ENCODE measurements at regions of chr9 and their contacts with region 1.

Region 1: GRCh38 chr9:27489087-27489876 is 34.8 kb upstream of the IFNK start:
- DNase-seq: no peak
- H3K4me3 ChIP-seq: peak overlapping the region in 2 of 4 experiments; percentile 2 to 28; a peak in 2 of 8 replicates
- H3K27ac ChIP-seq: peak overlapping the region; percentile 50; the same call in 1 of the 2 replicates
- H3K4me1 ChIP-seq: peaks cover 11 to 27% (median 18%) of the 10 kb centered on the region in 4 experiments; a peak in 6 of 7 replicates
- H3K27me3 ChIP-seq: no peaks in the 10 kb centered on the region
- CTCF ChIP-seq: peak in 1 of 3 experiments; percentile 3; a peak in 2 of 4 replicates
- EP300 ChIP-seq: no peak
- POLR2A ChIP-seq: no peak
- RAD21 ChIP-seq: peak; percentile 30 to 32; a peak in 2 of 4 replicates

Region 2: DNA sequence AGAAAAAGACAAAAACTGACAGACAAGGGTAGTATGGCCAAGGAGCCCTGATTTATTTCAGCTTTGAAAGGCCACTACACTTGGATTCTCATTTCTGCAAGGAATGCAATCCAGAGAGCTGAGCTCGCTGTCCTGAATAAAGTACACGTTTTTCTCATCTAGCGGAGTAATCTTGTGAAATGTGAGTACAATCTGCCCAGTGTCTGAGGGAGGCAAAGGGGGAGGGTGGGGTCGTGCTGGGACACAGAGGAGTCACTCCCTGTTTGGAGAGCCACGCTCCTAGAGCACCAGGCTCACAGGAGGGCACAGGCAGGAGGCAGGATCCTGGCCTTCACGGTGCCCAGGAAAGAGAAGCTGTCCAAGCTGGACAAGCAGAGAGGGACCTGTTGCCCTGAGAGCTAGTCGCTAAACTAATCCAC is 16.2 kb before region 1 on chr9:
- CTCF ChIA-PET with region 1: interaction called, 28 read pairs
- POLR2A ChIA-PET with region 1: interaction called, 5 read pairs
- DNase-seq: no peak
- H3K4me3 ChIP-seq: no peak overlapping the region
- H3K27ac ChIP-seq: no peak overlapping the region
- H3K4me1 ChIP-seq: peaks cover 0 to 13% (median 3%) of the 10 kb centered on the region in 4 experiments; a peak in 2 of 7 replicates
- H3K27me3 ChIP-seq: no peaks in the 10 kb centered on the region
- CTCF ChIP-seq: no peak
- EP300 ChIP-seq: no peak
- POLR2A ChIP-seq: no peak
- RAD21 ChIP-seq: no peak

Region 3: DNA sequence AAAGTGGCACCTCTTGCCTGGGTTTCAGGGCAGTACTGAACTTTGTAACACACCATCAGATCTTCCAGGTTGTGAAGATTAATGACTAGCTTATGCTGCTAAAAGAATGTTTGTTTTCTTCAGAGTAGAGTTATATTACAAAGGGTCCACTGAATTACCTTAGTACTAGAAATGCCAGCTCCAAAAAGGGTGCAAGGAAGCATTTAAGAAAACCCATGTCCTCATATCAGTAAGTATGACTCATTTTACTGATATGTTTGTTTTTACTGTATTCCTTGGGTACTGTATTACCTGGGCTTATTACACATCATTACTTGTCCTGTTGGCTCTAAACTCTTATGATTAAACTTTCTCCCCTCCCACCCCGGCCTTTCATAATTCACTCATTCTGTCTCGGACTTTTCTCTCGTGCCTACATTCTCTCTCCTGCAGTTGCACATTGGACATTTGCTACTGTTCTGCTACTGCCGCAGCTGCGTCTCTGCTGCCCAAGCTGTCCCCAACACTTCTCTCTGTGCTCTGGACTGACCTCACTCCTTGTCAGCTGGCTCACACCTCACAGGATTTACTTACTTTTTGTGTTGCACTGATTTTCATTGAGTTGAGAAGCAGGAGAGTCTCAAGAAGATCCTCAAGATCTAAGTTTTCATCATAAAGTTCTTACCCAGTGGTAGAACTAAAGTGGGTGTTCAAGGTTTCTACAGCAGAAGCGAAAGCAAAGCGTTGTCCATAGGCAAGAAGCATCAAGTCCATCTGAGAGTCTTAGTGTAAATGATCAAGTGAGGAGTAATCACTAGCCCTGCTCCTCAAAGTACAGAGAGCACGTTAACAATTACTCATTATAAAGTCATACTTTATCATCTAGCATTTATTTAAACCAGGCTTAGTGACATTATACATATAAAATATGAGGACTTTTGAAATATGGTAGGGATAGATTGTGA is 137.2 kb after region 1 on chr9:
- CTCF ChIA-PET with region 1: no interaction called
- POLR2A ChIA-PET with region 1: no interaction called
- DNase-seq: no peak
- H3K4me3 ChIP-seq: no peak overlapping the region
- H3K27ac ChIP-seq: no peak overlapping the region
- H3K4me1 ChIP-seq: peaks cover 0 to 4% (median 2%) of the 10 kb centered on the region in 4 experiments; a peak in 2 of 7 replicates
- H3K27me3 ChIP-seq: no peaks in the 10 kb centered on the region
- CTCF ChIP-seq: no peak
- EP300 ChIP-seq: no peak
- POLR2A ChIP-seq: no peak
- RAD21 ChIP-seq: no peak

Measured in H1 (cell line).